ENCODE measurements at regions of chr21 and their contacts with region 1.

Region 1: DNA sequence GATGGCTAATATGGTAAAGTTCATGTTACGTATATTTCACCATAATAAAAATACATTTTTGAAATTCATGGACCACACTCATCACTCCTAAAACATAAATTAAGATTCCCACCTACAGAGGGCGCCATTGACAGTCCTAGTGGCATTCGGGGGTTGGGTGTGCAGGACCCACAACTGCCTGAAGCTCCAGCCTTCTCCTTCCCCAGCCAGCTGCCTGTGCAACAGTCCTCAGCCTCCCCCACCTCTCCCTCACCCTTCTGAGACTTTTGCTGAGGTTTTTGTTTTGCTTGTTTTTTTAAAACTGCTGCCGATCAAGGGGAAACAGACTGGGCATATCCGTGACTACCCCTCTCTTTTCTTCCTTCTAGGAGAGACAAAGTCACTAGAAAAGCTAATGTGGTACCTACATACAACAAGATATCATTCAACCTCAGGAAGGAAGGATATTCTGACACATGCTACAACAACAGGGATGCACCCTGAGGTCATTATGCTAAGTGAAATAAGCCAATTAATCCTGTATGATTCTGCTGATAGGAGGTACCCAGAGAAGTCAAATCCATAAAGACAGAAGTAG is 9.2 kb upstream of the EVA1C start:
- DNase-seq: peak; percentile 72
- ATAC-seq: peak; percentile 88 to 89

Region 2: GRCh38 chr21:32569261-32570230 is 166.3 kb after region 1 on chr21:
- intact Hi-C with region 1: loop called (anchors 2 to 5 kb)
- DNase-seq: peak; percentile 80
- ATAC-seq: peak; percentile 92 to 96

Region 3: DNA sequence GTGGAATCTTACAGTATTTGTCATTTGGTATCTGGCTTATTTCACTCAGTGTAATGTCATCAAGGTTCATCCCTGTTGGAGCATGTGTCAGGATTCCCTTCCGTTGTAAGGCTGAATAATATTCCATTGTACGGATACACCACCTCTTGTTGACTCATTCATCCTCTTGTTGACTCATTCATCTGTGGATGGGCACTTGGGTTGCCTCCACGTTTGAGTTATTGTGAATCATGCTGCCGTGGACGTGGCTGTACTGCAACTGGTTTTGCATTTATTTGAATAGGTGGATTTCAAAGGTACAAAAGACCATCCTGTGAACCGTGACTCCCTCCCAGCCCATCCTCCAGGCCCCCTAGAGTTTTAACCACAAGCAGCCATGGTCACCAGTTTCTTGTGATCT is 193.9 kb after region 1 on chr21:
- intact Hi-C with region 1: loop called in 1 of 2 experiments (anchors 5 kb)
- DNase-seq: no peak
- ATAC-seq: no peak

Region 4: GRCh38 chr21:32834916-32835235 is 431.6 kb after region 1 on chr21:
- intact Hi-C with region 1: no loop called
- DNase-seq: no peak
- ATAC-seq: no peak